Activated CD4-positive, alpha-beta T cell treated with anti-CD3 and anti-CD28 coated beads for 36 hours (primary cell): ENCODE measurements at regions of chr1 and their contacts with region 1.

Region 1: DNA sequence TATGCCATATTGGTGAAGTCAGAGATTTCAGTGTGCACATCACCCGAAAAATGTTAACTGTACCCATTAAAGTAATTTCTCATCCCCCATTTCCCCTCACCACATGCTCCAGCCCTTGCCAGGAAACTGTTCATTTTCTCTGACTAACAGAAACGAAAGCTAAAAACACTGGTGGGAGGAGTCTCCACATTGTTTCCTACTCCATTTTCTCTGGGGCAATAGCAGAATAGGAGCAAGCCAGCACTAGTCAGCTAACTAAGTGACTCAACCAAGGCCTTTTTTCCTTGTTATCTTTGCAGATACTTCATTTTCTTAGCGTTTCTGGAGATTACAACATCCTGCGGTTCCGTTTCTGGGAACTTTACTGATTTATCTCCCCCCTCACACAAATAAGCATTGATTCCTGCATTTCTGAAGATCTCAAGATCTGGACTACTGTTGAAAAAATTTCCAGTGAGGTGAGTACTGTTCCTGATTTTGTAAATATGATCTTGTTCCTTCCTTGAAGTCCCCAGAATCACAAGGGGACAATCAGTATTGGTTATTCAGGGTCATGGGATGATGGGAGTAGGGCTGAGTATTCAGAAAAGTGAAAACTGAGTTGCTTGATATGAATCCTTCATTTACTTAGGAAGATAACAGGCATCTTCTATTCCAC is at the start of gene IFI16:
- DNase-seq: peak; percentile 75
- ATAC-seq: peak; percentile 70
- H3K4me3 Mint-ChIP-seq: peak within 1 kb of the TSS; percentile 82
- H3K27ac Mint-ChIP-seq: peak within 1 kb of the TSS; percentile 97
- H3K4me1 Mint-ChIP-seq: peaks cover 43% of the 10 kb centered on the region
- H3K27me3 Mint-ChIP-seq: no peaks in the 10 kb centered on the region
- total RNA-seq, gene IFI16: 263 to 308 TPM

Region 2: DNA sequence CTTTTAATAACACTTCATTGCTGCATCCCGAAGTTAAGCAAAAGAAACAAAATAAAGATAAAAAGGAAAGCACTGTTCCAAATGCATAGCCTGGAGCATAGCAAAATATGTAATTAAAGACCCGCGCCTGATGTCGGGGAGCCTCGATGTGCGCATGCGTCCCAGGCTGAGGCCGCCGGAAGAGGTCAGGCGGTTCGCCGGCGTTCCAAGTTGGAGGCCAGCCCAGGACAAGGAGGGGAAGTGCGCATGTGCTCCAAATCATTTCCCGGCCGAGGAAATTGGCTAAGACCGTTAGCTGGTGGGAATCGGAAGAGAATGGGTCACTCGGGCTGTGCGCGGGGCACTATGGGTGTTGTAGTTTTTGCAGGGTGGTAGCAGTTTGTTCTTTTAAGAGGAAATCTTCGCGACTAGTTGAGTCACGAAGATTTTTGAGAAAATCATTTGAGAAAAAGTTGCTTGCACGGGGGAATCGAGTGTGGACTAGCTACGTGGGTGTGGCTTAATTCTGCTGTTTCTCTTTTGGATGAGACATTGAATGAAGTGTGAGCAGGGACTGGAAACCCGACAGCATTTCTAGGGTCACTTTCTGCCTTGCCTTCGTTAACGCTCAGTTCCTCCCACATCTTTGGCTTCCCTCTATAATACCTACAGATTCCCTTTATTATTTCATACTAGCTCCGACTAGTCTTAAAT is 860.1 kb before region 1 on chr1:
- CTCF ChIA-PET with region 1: no interaction called
- POLR2A ChIA-PET with region 1: no interaction called
- intact Hi-C with region 1: loop called in 1 of 2 experiments (anchors 5 kb)
- DNase-seq: peak; percentile 86
- ATAC-seq: peak; percentile 93
- H3K4me3 Mint-ChIP-seq: peak overlapping the region; percentile 74
- H3K27ac Mint-ChIP-seq: peak overlapping the region; percentile 88
- H3K4me1 Mint-ChIP-seq: peaks cover 29% of the 10 kb centered on the region
- H3K27me3 Mint-ChIP-seq: peaks cover 3% of the 10 kb centered on the region

Region 3: GRCh38 chr1:158706096-158706495 is 303.7 kb before region 1 on chr1:
- CTCF ChIA-PET with region 1: no interaction called
- POLR2A ChIA-PET with region 1: no interaction called
- intact Hi-C with region 1: no loop called
- DNase-seq: no peak
- ATAC-seq: no peak
- H3K4me3 Mint-ChIP-seq: no peak overlapping the region
- H3K27ac Mint-ChIP-seq: no peak overlapping the region
- H3K4me1 Mint-ChIP-seq: no peaks in the 10 kb centered on the region
- H3K27me3 Mint-ChIP-seq: peaks cover 5% of the 10 kb centered on the region

Region 4: DNA sequence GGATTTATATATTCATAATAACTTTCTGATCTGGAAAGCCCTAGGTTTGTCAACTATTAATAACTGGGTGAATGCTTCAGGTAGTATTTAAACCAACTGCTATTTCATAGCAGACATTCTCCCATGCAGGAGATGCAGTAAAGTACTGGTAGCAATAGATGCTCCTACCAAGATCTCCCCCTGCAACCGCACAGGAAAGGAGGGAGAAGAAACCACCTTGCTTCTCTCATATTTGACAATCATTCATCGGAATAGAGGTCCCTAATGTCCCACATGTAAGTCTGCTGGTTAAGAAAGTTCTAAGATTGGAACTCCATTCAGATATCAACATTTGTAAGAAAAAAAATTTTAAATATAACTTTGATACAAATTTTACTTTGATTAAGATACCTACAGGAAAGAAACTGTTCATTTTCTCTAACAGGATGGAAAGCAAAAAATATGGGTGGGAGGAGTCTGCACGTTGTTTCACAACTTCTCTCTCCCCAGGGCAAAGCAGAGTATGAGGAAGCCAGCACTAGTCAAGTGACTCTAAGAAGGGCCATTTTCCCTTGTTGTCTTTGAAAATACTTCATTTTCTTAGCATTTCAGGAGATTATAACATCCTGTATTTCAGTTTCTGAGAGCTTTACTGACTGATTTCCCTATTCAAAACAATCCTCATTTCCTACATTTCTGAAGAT is 78.6 kb before region 1 on chr1 and contains the start of gene PYHIN1:
- CTCF ChIA-PET with region 1: no interaction called
- POLR2A ChIA-PET with region 1: no interaction called
- intact Hi-C with region 1: loop called in 1 of 2 experiments (anchors 2 kb)
- DNase-seq: peak; percentile 30
- ATAC-seq: peak; percentile 79
- H3K4me3 Mint-ChIP-seq: peak within 1 kb of the TSS; percentile 65
- H3K27ac Mint-ChIP-seq: peak within 1 kb of the TSS; percentile 75
- H3K4me1 Mint-ChIP-seq: peaks cover 32% of the 10 kb centered on the region
- H3K27me3 Mint-ChIP-seq: peaks cover 3% of the 10 kb centered on the region
- total RNA-seq, gene PYHIN1: 5.6 to 6.8 TPM

Region 5: DNA sequence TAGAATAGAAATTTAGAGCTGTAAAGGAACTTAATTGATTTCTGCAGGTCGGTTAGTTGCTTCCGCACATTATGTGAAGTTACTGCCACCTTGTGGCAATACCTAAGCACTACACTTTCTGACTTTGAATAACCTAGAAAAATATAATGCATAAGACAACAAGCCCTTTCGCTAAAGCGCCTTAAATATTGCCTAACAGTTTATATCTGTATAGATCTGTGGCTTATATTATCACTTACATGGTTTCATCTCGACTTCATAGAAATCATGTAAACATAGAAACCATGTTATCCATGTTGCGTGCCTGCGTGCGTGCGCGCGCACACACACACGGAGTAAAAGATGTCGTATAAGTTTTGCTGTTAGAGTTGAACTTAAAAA is 11.1 kb before region 1 on chr1:
- CTCF ChIA-PET with region 1: interaction called, 10 read pairs
- POLR2A ChIA-PET with region 1: interaction called, 7 read pairs
- intact Hi-C with region 1: no loop called
- DNase-seq: peak; percentile 50
- ATAC-seq: peak; percentile 56
- H3K4me3 Mint-ChIP-seq: no peak overlapping the region
- H3K27ac Mint-ChIP-seq: no peak overlapping the region
- H3K4me1 Mint-ChIP-seq: peaks cover 27% of the 10 kb centered on the region
- H3K27me3 Mint-ChIP-seq: no peaks in the 10 kb centered on the region

Region 6: GRCh38 chr1:159077120-159077961 is 67.5 kb after region 1 on chr1:
- CTCF ChIA-PET with region 1: interaction called, 17 read pairs
- POLR2A ChIA-PET with region 1: interaction called, 43 read pairs
- intact Hi-C with region 1: loop called (anchors 1 kb)
- DNase-seq: peak; percentile 98
- ATAC-seq: peak; percentile 83
- H3K4me3 Mint-ChIP-seq: peak overlapping the region; percentile 85
- H3K27ac Mint-ChIP-seq: peak overlapping the region; percentile 99
- H3K4me1 Mint-ChIP-seq: peaks cover 43% of the 10 kb centered on the region
- H3K27me3 Mint-ChIP-seq: no peaks in the 10 kb centered on the region

Region 7: GRCh38 chr1:159239551-159240220 is 229.9 kb after region 1 on chr1:
- CTCF ChIA-PET with region 1: no interaction called
- POLR2A ChIA-PET with region 1: no interaction called
- intact Hi-C with region 1: no loop called
- DNase-seq: no peak
- ATAC-seq: no peak
- H3K4me3 Mint-ChIP-seq: no peak overlapping the region
- H3K27ac Mint-ChIP-seq: no peak overlapping the region
- H3K4me1 Mint-ChIP-seq: no peaks in the 10 kb centered on the region
- H3K27me3 Mint-ChIP-seq: peaks cover 16% of the 10 kb centered on the region

Region 8: DNA sequence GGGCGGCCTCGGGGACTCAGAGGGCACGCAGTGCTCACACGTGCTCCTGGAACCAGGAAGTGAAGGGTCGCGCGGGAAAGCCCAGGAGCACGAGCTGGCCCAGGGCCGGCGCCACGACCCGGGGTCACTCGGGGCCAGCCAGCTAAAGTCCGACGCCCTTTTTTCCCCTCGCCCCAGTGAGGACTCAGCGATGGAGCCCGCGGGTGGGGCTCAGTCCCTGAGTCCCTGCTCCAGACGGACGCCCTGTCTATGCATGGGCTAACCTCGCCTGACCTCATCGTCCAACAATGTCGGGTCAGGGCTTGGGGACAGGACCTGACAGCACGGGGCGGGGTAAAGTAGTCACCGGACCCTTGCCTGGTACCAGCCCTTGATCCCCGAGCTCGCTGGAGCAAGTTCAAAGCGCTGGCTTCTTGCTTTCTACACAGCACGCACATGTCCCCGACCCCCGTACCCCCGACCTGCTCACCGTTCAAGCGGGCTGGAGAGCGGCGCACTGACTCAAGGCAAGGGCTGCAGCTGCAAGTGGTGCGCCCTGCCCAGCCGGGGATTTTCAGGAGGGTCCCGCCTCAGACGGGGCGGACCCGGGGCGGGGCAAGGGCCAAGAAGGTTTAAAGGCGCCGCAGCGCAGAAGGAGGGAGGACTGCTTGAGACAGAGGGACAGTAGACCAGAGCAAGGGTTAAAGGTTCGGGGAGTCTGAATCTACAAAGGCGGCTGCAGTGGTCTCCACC is 915.3 kb after region 1 on chr1 and contains the start of gene TAGLN2:
- CTCF ChIA-PET with region 1: no interaction called
- POLR2A ChIA-PET with region 1: no interaction called
- intact Hi-C with region 1: loop called in 1 of 2 experiments (anchors 5 kb)
- DNase-seq: peak; percentile 94
- ATAC-seq: peak; percentile 69
- H3K4me3 Mint-ChIP-seq: peak within 1 kb of the TSS; percentile 95
- H3K27ac Mint-ChIP-seq: peak within 1 kb of the TSS; percentile 98
- H3K4me1 Mint-ChIP-seq: peaks cover 38% of the 10 kb centered on the region
- H3K27me3 Mint-ChIP-seq: no peaks in the 10 kb centered on the region
- total RNA-seq, gene TAGLN2: 410 to 495 TPM